Activated CD4-positive, alpha-beta memory T cell treated with anti-CD3 and anti-CD28 coated beads for 36 hours (primary cell): ENCODE measurements at regions of chr1 and their contacts with region 1.

Region 1: GRCh38 chr1:98388441-98388840 is 273.1 kb upstream of the SNX7 start:
- DNase-seq: peak; percentile 13
- H3K4me3 Mint-ChIP-seq: no peak overlapping the region
- H3K27ac Mint-ChIP-seq: no peak overlapping the region
- H3K4me1 Mint-ChIP-seq: peaks cover 17% of the 10 kb centered on the region
- H3K27me3 Mint-ChIP-seq: no peaks in the 10 kb centered on the region

Region 2: GRCh38 chr1:98398649-98399048 is 10.2 kb after region 1 on chr1:
- CTCF ChIA-PET with region 1: no interaction called
- POLR2A ChIA-PET with region 1: no interaction called
- intact Hi-C with region 1: loop called (anchors 1 kb)
- DNase-seq: no peak
- H3K4me3 Mint-ChIP-seq: no peak overlapping the region
- H3K27ac Mint-ChIP-seq: no peak overlapping the region
- H3K4me1 Mint-ChIP-seq: peaks cover 4% of the 10 kb centered on the region
- H3K27me3 Mint-ChIP-seq: no peaks in the 10 kb centered on the region

Region 3: DNA sequence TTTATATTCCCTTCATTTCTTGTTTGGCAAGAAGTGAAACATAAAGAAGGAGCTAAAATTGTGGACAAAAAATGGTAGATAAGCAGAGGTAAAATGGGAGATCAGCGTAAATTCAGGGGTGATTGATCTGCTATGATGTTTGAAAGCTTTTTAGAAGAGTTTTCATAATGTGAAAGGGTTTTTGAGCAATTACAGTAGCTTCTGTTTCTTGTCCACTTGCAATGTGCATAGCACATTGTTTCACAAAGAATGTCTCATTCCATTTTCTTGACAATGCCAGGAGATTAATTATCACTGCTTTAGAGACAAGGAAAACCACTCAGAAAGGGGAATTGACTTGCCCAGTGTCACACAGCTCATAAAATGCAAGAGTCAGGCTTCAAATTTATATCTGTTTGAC is 810.0 kb after region 1 on chr1:
- CTCF ChIA-PET with region 1: no interaction called
- POLR2A ChIA-PET with region 1: no interaction called
- intact Hi-C with region 1: no loop called
- DNase-seq: no peak
- H3K4me3 Mint-ChIP-seq: no peak overlapping the region
- H3K27ac Mint-ChIP-seq: no peak overlapping the region
- H3K4me1 Mint-ChIP-seq: no peaks in the 10 kb centered on the region
- H3K27me3 Mint-ChIP-seq: peaks cover 6% of the 10 kb centered on the region